HepG2 (cell line): ENCODE measurements at regions of chr2 and their contacts with region 1.

Region 1: GRCh38 chr2:106104332-106105062 is 89.6 kb downstream of the UXS1 start:
- DNase-seq: peak; percentile 72
- ATAC-seq: peak; percentile 86
- H3K4me3 ChIP-seq: no peak overlapping the region
- H3K27ac ChIP-seq: no peak overlapping the region
- H3K4me1 ChIP-seq: no peaks in the 10 kb centered on the region
- H3K27me3 ChIP-seq: no peaks in the 10 kb centered on the region
- CTCF ChIP-seq: peak; percentile 95
- EP300 ChIP-seq: no peak
- POLR2A ChIP-seq: no peak
- RAD21 ChIP-seq: peak; percentile 92

Region 2: GRCh38 chr2:106115250-106115649 is 10.8 kb after region 1 on chr2:
- CTCF ChIA-PET with region 1: no interaction called
- POLR2A ChIA-PET with region 1: no interaction called
- in situ Hi-C with region 1: no loop called
- intact Hi-C with region 1: no loop called
- DNase-seq: peak; percentile 84
- ATAC-seq: peak; percentile 77
- H3K4me3 ChIP-seq: no peak overlapping the region
- H3K27ac ChIP-seq: peak overlapping the region; percentile 27
- H3K4me1 ChIP-seq: peaks cover 35% of the 10 kb centered on the region
- H3K27me3 ChIP-seq: no peaks in the 10 kb centered on the region
- CTCF ChIP-seq: no peak
- EP300 ChIP-seq: no peak
- POLR2A ChIP-seq: no peak
- RAD21 ChIP-seq: no peak

Region 3: DNA sequence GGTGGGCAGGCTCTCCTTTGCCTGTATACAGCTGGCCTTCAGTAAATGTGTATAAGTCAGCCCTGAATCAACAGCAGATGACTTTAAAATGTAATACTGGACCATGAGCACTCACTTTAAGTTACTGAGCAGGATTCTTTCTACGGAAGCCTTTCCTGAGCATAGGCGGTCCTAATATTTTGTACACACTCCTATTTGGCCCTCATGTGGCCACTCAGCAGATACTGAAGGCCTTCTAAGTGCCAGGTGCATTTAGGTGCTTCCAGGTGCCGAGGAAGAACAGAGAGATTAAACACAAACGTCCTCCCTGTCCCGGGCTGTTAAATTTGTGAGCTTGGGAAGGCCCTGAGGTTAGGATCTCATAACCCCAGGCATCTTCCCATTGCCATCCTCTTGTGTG is 62.6 kb after region 1 on chr2:
- CTCF ChIA-PET with region 1: no interaction called
- POLR2A ChIA-PET with region 1: no interaction called
- in situ Hi-C with region 1: no loop called
- intact Hi-C with region 1: loop called (anchors 2 kb)
- DNase-seq: no peak
- ATAC-seq: peak; percentile 50
- H3K4me3 ChIP-seq: no peak overlapping the region
- H3K27ac ChIP-seq: no peak overlapping the region
- H3K4me1 ChIP-seq: peaks cover 48% of the 10 kb centered on the region
- H3K27me3 ChIP-seq: no peaks in the 10 kb centered on the region
- CTCF ChIP-seq: no peak
- EP300 ChIP-seq: no peak
- POLR2A ChIP-seq: no peak
- RAD21 ChIP-seq: no peak

Region 4: GRCh38 chr2:106205488-106205887 is 101.0 kb after region 1 on chr2:
- CTCF ChIA-PET with region 1: no interaction called
- POLR2A ChIA-PET with region 1: no interaction called
- in situ Hi-C with region 1: no loop called
- intact Hi-C with region 1: no loop called
- DNase-seq: no peak
- ATAC-seq: no peak
- H3K4me3 ChIP-seq: no peak overlapping the region
- H3K27ac ChIP-seq: no peak overlapping the region
- H3K4me1 ChIP-seq: no peaks in the 10 kb centered on the region
- H3K27me3 ChIP-seq: peaks cover 0 to 5% of the 10 kb centered on the region in 2 experiments; a peak in 2 of 5 replicates
- CTCF ChIP-seq: no peak
- EP300 ChIP-seq: no peak
- POLR2A ChIP-seq: no peak
- RAD21 ChIP-seq: no peak

Region 5: GRCh38 chr2:106582148-106583143 is 477.9 kb after region 1 on chr2:
- CTCF ChIA-PET with region 1: interaction called, 3 read pairs
- POLR2A ChIA-PET with region 1: no interaction called
- in situ Hi-C with region 1: no loop called
- intact Hi-C with region 1: loop called (anchors 5 kb)
- DNase-seq: peak; percentile 79
- ATAC-seq: peak; percentile 98
- H3K4me3 ChIP-seq: peak overlapping the region in 1 of 3 experiments; percentile 47; a peak in 2 of 6 replicates
- H3K27ac ChIP-seq: no peak overlapping the region
- H3K4me1 ChIP-seq: peaks cover 17% of the 10 kb centered on the region
- H3K27me3 ChIP-seq: peaks cover 0 to 34% of the 10 kb centered on the region in 2 experiments; a peak in 2 of 5 replicates
- CTCF ChIP-seq: peak; percentile 93
- EP300 ChIP-seq: no peak
- POLR2A ChIP-seq: no peak
- RAD21 ChIP-seq: peak; percentile 68